Activated T-helper 2 cell treated with anti-CD3 and anti-CD28 coated beads, Interferon-gamma antibody, Interleukin-2, Interleukin-4, amounts not matched to agents 10 μg/mL and 5 μg/mL and 100 μg/mL, durations not matched to agents 14 hours and 24 hours and 36 hours (primary cell): ENCODE measurements at regions of chr17 and their contacts with region 1.

Region 1: GRCh38 chr17:32877164-32877764 is 340 bp upstream of the MYO1D start:
- DNase-seq: peak; percentile 92
- H3K4me3 Mint-ChIP-seq: peak overlapping the region; percentile 69
- H3K27ac Mint-ChIP-seq: peak overlapping the region; percentile 72
- H3K4me1 Mint-ChIP-seq: peaks cover 33% of the 10 kb centered on the region
- H3K27me3 Mint-ChIP-seq: peaks cover 16% of the 10 kb centered on the region

Region 2: GRCh38 chr17:32783602-32784001 is 93.7 kb before region 1 on chr17:
- intact Hi-C with region 1: loop called (anchors 1 kb)
- DNase-seq: no peak
- H3K4me3 Mint-ChIP-seq: no peak overlapping the region
- H3K27ac Mint-ChIP-seq: no peak overlapping the region
- H3K4me1 Mint-ChIP-seq: peaks cover 4% of the 10 kb centered on the region
- H3K27me3 Mint-ChIP-seq: peaks cover 7% of the 10 kb centered on the region

Region 3: DNA sequence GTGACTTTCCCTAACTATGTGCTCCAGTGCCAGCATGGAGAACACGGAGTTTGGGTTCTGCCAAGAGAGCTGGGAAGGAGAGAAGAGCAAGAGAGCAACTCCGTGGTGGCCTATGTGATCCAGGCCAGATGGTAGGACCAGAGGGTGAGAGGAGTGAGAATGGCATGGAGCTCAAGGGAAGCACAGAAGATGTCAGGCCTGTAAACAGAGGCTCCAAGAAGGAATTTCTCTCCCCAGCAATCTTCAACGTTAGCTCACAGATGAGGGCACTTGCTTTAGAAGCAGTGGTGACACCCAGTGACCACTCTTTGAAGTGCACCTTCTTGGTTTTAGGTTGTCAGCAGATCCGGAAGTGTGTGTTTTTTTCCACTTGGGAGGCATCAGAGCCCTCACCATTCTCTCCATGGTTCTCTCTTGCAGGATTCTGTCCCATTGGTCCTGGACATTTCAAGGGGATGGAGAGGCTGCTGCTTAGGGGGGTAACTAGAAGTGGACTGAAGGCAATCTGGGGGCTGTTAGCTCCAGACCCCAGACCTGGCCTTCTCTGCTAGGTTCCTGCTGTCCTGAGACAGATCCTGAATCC is 32.6 kb after region 1 on chr17:
- intact Hi-C with region 1: loop called (anchors 1 kb)
- DNase-seq: peak; percentile 57
- H3K4me3 Mint-ChIP-seq: no peak overlapping the region
- H3K27ac Mint-ChIP-seq: peak overlapping the region; percentile 24
- H3K4me1 Mint-ChIP-seq: peaks cover 48% of the 10 kb centered on the region
- H3K27me3 Mint-ChIP-seq: no peaks in the 10 kb centered on the region

Region 4: DNA sequence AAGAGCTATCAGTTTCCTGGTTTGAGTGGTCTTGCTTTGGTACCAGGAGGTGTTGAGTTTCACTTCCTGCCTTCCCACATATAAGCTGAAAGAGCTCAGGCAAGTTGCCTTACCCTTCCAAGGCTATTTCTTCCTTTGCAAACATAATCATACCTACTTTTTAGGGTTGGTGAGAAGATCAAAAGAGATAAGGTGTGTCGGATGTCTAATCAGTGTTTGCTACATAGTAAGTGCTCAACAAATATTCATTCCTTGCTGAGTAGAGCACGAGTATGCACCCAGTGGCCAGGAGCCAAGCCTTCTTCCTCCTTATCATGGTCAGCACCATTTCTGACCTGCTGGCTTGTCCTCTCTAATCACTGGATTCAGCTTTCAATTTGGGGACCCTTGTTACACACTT is 38.0 kb after region 1 on chr17:
- intact Hi-C with region 1: loop called (anchors 1 kb)
- DNase-seq: peak; percentile 7
- H3K4me3 Mint-ChIP-seq: peak overlapping the region; percentile 30
- H3K27ac Mint-ChIP-seq: peak overlapping the region; percentile 93
- H3K4me1 Mint-ChIP-seq: peaks cover 58% of the 10 kb centered on the region
- H3K27me3 Mint-ChIP-seq: no peaks in the 10 kb centered on the region

Region 5: GRCh38 chr17:32936894-32937500 is 59.7 kb after region 1 on chr17:
- intact Hi-C with region 1: loop called (anchors 2 kb)
- DNase-seq: peak; percentile 56
- H3K4me3 Mint-ChIP-seq: no peak overlapping the region
- H3K27ac Mint-ChIP-seq: no peak overlapping the region
- H3K4me1 Mint-ChIP-seq: peaks cover 6% of the 10 kb centered on the region
- H3K27me3 Mint-ChIP-seq: peaks cover 4% of the 10 kb centered on the region

Region 6: GRCh38 chr17:32971171-32971570 is 93.9 kb after region 1 on chr17:
- intact Hi-C with region 1: loop called (anchors 5 kb)
- DNase-seq: peak; percentile 40
- H3K4me3 Mint-ChIP-seq: peak overlapping the region; percentile 18
- H3K27ac Mint-ChIP-seq: peak overlapping the region; percentile 1
- H3K4me1 Mint-ChIP-seq: peaks cover 24% of the 10 kb centered on the region
- H3K27me3 Mint-ChIP-seq: peaks cover 9% of the 10 kb centered on the region